ENCODE measurements at regions of chr18 and their contacts with region 1.

Region 1: GRCh38 chr18:3771121-3771971 is 321.4 kb downstream of the TGIF1 start:
- DNase-seq: peak; percentile 41
- ATAC-seq: peak; percentile 99
- H3K4me3 ChIP-seq: peak overlapping the region; percentile 36 to 57
- H3K27ac ChIP-seq: no peak overlapping the region
- H3K4me1 ChIP-seq: peaks cover 0 to 11% of the 10 kb centered on the region in 2 experiments; a peak in 3 of 4 replicates
- H3K27me3 ChIP-seq: no peaks in the 10 kb centered on the region
- CTCF ChIP-seq: peak; percentile 54 to 94 (median 88)
- POLR2A ChIP-seq: no peak
- RAD21 ChIP-seq: peak; percentile 77

Region 2: GRCh38 chr18:3350566-3351527 is 420.5 kb before region 1 on chr18:
- CTCF ChIA-PET with region 1: no interaction called
- POLR2A ChIA-PET with region 1: no interaction called
- RAD21 ChIA-PET with region 1: no interaction called
- intact Hi-C with region 1: no loop called
- DNase-seq: peak; percentile 60
- ATAC-seq: peak; percentile 90
- H3K4me3 ChIP-seq: peak overlapping the region in 1 of 2 experiments; percentile 4; a peak in 1 of 4 replicates
- H3K27ac ChIP-seq: peak overlapping the region; percentile 82
- H3K4me1 ChIP-seq: peaks cover 20 to 21% of the 10 kb centered on the region in 2 experiments
- H3K27me3 ChIP-seq: no peaks in the 10 kb centered on the region
- CTCF ChIP-seq: no peak
- POLR2A ChIP-seq: no peak
- RAD21 ChIP-seq: peak; percentile 14; the same call in 1 of the 2 replicates

Region 3: GRCh38 chr18:3703732-3704176 is 67.6 kb before region 1 on chr18:
- CTCF ChIA-PET with region 1: interaction called, 19 read pairs
- POLR2A ChIA-PET with region 1: no interaction called
- RAD21 ChIA-PET with region 1: no interaction called
- intact Hi-C with region 1: loop called (anchors 5 kb)
- DNase-seq: peak; percentile 48
- ATAC-seq: peak; percentile 94
- H3K4me3 ChIP-seq: peak overlapping the region in 1 of 2 experiments; percentile 19; a peak in 3 of 4 replicates
- H3K27ac ChIP-seq: no peak overlapping the region
- H3K4me1 ChIP-seq: peaks cover 7 to 16% of the 10 kb centered on the region in 2 experiments
- H3K27me3 ChIP-seq: no peaks in the 10 kb centered on the region
- CTCF ChIP-seq: peak; percentile 74 to 82 (median 77)
- POLR2A ChIP-seq: no peak
- RAD21 ChIP-seq: peak; percentile 70

Region 4: DNA sequence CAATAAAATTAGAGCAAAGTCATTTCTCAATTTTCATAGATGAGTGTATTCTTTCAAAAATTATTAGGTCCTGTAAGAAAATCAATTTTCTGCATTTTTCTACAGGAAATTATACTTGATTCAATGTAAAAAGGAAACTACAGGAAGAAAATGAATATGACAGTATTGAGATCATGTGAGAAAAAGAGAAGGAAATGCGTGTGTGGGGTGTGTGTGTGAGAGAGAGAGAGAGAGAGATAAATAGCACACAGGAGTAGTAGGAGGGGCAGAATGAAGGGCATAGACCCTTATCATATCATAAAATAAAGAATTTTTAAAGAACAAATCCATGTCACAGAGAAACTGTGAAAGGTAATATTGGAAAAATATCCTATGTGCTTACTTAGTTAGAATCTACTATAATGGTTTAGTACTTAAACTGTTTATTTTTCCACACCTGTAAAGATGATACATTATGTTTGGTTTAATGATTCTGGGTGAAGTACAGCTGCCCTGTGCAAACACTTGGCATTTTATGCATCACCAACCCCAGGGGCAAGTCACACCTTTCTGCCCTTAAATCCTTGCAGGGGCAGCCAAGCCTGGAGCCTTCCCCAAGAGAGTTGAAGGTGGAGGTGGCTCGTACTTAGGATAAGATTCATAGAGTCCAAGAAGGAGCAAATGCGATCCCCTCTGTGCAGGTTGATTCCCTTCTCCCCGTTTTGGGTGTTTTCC is 45.0 kb before region 1 on chr18:
- CTCF ChIA-PET with region 1: no interaction called
- POLR2A ChIA-PET with region 1: no interaction called
- RAD21 ChIA-PET with region 1: no interaction called
- intact Hi-C with region 1: no loop called
- DNase-seq: no peak
- ATAC-seq: no peak
- H3K4me3 ChIP-seq: no peak overlapping the region
- H3K27ac ChIP-seq: no peak overlapping the region
- H3K4me1 ChIP-seq: no peaks in the 10 kb centered on the region; a peak in 1 of 4 replicates
- H3K27me3 ChIP-seq: no peaks in the 10 kb centered on the region
- CTCF ChIP-seq: no peak
- POLR2A ChIP-seq: no peak
- RAD21 ChIP-seq: no peak

Region 5: DNA sequence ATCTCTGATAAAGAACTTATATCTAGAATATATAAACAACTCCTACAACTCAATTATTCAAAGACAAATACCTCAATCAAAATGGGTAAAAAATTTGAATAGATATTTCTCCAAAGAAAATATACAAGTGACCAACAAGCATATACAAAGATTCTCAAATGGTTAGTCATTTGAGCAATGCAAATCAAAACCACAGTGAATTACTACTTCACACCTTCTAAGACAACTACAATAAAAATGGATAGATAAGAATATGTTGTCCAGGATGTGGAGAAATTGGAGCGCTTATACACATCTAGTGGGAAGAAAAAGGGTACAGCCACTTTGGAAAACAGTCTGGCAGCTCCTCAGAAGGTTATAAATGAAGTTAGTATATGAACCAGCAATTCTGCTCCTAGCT is 11.6 kb after region 1 on chr18:
- CTCF ChIA-PET with region 1: interaction called, 25 read pairs
- POLR2A ChIA-PET with region 1: no interaction called
- RAD21 ChIA-PET with region 1: no interaction called
- intact Hi-C with region 1: no loop called
- DNase-seq: no peak
- ATAC-seq: no peak
- H3K4me3 ChIP-seq: no peak overlapping the region
- H3K27ac ChIP-seq: no peak overlapping the region
- H3K4me1 ChIP-seq: no peaks in the 10 kb centered on the region
- H3K27me3 ChIP-seq: no peaks in the 10 kb centered on the region
- CTCF ChIP-seq: no peak
- POLR2A ChIP-seq: no peak
- RAD21 ChIP-seq: no peak

Region 6: DNA sequence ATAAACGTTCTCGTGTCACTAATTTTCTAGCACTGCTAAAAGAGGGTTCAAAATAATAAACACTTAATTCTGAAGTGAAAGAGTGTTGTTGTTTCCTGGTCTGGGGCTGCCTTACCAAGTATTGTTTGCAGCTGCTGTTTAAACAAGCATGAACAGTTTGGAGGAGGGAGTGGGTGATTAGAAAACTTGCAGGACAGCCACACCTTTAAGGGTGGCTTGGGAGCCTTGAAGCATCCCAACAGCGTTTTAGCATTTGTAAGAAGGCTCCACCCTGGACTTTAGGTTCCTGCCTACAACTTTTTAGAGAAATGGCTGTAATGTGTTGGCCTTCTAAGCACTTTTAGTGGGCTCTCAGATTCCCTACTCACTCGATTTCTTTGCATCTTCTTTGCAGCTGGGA is 50.2 kb after region 1 on chr18:
- CTCF ChIA-PET with region 1: no interaction called
- POLR2A ChIA-PET with region 1: no interaction called
- RAD21 ChIA-PET with region 1: no interaction called
- intact Hi-C with region 1: no loop called
- DNase-seq: no peak
- ATAC-seq: no peak
- H3K4me3 ChIP-seq: no peak overlapping the region
- H3K27ac ChIP-seq: no peak overlapping the region
- H3K4me1 ChIP-seq: peaks cover 2 to 5% of the 10 kb centered on the region in 2 experiments; a peak in 2 of 4 replicates
- H3K27me3 ChIP-seq: no peaks in the 10 kb centered on the region
- CTCF ChIP-seq: no peak
- POLR2A ChIP-seq: no peak
- RAD21 ChIP-seq: no peak

Region 7: DNA sequence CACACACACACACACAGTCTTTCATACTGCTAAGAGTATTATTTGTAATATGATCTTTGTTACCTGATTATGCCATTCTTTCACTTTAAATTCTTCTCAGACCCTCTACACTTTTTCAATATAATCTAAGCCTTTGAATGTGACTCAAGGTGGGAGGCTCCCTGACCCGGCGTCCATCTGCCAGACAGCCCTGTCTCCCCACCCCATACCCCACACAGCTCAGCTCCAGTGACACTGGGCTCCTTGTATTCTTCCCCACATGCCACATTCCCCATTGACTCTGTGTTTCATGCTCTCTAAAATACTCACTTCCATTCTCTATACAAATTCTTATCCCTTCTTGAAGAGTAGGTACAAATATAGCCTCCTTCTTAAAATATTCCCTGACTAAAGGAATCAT is 120.8 kb after region 1 on chr18:
- CTCF ChIA-PET with region 1: no interaction called
- POLR2A ChIA-PET with region 1: no interaction called
- RAD21 ChIA-PET with region 1: no interaction called
- intact Hi-C with region 1: no loop called
- DNase-seq: no peak
- ATAC-seq: no peak
- H3K4me3 ChIP-seq: no peak overlapping the region
- H3K27ac ChIP-seq: no peak overlapping the region
- H3K4me1 ChIP-seq: no peaks in the 10 kb centered on the region
- H3K27me3 ChIP-seq: no peaks in the 10 kb centered on the region
- CTCF ChIP-seq: no peak
- POLR2A ChIP-seq: no peak
- RAD21 ChIP-seq: no peak

Region 8: GRCh38 chr18:3970929-3971328 is 199.6 kb after region 1 on chr18:
- CTCF ChIA-PET with region 1: interaction called, 12 read pairs
- POLR2A ChIA-PET with region 1: no interaction called
- RAD21 ChIA-PET with region 1: no interaction called
- intact Hi-C with region 1: no loop called
- DNase-seq: no peak
- ATAC-seq: peak; percentile 78
- H3K4me3 ChIP-seq: no peak overlapping the region
- H3K27ac ChIP-seq: no peak overlapping the region
- H3K4me1 ChIP-seq: peaks cover 6 to 13% of the 10 kb centered on the region in 2 experiments; a peak in 3 of 4 replicates
- H3K27me3 ChIP-seq: no peaks in the 10 kb centered on the region
- CTCF ChIP-seq: peak; percentile 6 to 34 (median 32); a peak in 1 of 6 replicates
- POLR2A ChIP-seq: no peak
- RAD21 ChIP-seq: no peak

Region 9: GRCh38 chr18:4017480-4017879 is 246.1 kb after region 1 on chr18:
- CTCF ChIA-PET with region 1: interaction called, 11 read pairs
- POLR2A ChIA-PET with region 1: no interaction called
- RAD21 ChIA-PET with region 1: no interaction called
- intact Hi-C with region 1: loop called (anchors 5 kb)
- DNase-seq: peak; percentile 38
- ATAC-seq: peak; percentile 98
- H3K4me3 ChIP-seq: no peak overlapping the region
- H3K27ac ChIP-seq: no peak overlapping the region
- H3K4me1 ChIP-seq: no peaks in the 10 kb centered on the region
- H3K27me3 ChIP-seq: no peaks in the 10 kb centered on the region
- CTCF ChIP-seq: peak; percentile 48 to 66 (median 53); a peak in 5 of 6 replicates
- POLR2A ChIP-seq: no peak
- RAD21 ChIP-seq: peak; percentile 48

Measured in HCT116 (cell line).